PC-9 (cell line): ENCODE measurements at regions of chr17 and their contacts with region 1.

Region 1: GRCh38 chr17:27321372-27321966 is 27.6 kb downstream of the WSB1 start:
- DNase-seq: peak in 1 of 2 experiments; percentile 37
- H3K4me3 ChIP-seq: no peak overlapping the region
- H3K27ac ChIP-seq: no peak overlapping the region
- H3K4me1 ChIP-seq: peaks cover 28% of the 10 kb centered on the region
- H3K27me3 ChIP-seq: no peaks in the 10 kb centered on the region
- CTCF ChIP-seq: no peak

Region 2: DNA sequence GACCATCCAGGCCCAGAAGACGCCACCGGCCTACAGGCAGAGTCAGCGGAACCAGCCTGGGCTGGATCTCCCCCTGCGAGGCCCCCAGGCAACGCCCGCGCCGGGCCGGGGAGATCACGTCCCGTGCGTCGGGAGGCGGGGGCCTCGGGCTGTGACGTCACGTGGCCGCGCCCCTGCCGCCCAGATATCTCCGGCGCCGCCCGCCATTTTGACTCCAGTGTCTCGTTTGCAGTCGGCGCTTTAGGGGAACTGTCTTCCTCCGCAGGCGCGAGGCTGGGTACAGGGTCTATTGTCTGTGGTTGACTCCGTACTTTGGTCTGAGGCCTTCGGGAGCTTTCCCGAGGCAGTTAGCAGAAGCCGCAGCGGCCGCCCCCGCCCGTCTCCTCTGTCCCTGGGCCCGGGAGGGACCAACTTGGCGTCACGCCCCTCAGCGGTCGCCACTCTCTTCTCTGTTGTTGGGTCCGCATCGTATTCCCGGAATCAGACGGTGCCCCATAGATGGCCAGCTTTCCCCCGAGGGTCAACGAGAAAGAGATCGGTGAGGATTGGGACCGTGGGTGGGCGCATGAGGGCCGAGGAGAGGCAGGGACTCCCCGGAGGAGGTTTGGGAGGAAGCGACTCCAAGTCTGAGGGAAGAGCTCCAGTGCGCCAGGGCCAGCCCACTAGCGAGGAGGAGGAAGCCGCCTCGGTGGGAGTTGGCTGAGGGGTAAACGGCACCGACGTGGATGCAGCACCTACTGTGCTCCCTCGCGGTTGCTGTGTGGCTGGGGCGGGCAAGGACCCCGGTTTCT is 27.4 kb before region 1 on chr17 and contains the start of gene WSB1:
- CTCF ChIA-PET with region 1: no interaction called
- POLR2A ChIA-PET with region 1: interaction called, 12 read pairs
- intact Hi-C with region 1: no loop called
- DNase-seq: peak; percentile 61 to 84
- H3K4me3 ChIP-seq: peak within 1 kb of the TSS; percentile 99
- H3K27ac ChIP-seq: peak within 1 kb of the TSS; percentile 88
- H3K4me1 ChIP-seq: peaks cover 26% of the 10 kb centered on the region
- H3K27me3 ChIP-seq: no peaks in the 10 kb centered on the region
- CTCF ChIP-seq: no peak; the same call in 1 of the 2 replicates
- total RNA-seq, gene WSB1: 66.2 and 101 TPM in 2 replicates